Posterior vena cava (tissue), 2 donors: ENCODE measurements at regions of chr19 and their contacts with region 1.

Region 1: GRCh38 chr19:15177269-15178116 is 23.3 kb downstream of the NOTCH3 start:
- DNase-seq: peak; percentile 94

Region 2: DNA sequence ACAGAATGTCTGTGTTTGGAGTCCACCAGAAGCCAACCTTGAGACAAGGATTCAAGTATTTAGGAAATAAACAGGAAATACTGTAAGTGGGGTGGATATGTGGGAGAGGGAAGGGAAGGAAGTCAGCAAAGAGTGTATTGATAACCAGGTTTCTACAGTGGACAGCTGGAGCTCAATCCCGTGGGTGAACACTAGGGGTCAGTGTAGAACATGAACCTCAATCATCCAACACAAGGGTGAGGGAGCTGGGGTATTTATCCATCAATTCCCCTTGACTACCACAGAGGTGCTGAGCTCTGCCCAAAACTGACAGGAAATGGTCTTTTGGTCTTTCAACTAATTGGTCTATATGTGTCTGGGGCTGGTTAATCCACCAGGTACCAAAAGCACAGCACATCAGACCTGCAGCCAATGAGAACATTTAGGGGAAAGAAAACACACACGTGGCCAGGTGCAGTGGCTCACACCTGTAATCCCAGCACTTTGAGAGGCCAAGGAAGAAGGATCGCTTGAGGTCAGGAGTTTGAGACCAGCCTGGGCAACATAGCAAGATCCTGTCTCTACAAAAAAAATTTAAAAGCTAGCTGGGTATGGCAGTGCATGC is 75.9 kb before region 1 on chr19:
- intact Hi-C with region 1: no loop called
- DNase-seq: no peak

Region 3: DNA sequence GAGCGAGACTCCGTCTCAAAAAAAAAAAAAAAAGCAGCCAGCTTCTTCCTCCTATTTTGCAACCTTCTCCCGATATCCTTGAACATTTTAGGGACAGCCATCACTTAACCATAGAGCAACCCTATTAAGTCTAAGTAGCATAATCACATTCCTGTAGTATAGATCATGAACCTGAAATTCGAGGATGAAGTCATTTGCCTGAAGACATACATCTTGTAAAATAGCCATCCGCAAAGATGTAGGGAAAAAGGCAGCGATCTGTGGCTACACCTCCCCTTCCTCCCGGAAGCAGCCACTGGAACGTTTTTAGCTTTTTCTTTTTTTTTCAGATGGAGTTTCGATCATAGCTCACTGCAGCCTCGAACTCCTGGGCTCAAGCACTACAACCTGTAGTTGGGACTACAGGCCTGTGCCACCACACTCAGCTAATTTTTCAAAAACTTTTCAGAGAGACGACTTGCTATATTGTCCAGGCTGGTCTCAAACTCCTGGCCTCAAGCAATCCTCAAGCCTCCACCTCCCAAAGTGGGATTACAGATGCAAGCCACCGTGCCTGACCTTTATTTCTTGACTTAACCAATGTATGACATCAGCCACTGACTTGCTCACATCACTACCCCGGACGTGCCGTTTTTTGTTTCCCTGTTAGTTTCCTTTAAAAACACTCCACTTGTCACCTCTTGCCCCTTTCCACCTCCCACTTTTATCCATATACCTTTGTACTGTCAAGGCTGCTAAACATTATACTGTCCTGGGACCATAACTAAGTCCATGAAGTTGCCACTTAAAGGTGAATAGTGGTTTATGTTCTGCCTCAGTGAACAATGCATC is 56.8 kb after region 1 on chr19:
- intact Hi-C with region 1: loop called in 1 of 2 experiments (anchors 10 kb)
- DNase-seq: no peak

Region 4: DNA sequence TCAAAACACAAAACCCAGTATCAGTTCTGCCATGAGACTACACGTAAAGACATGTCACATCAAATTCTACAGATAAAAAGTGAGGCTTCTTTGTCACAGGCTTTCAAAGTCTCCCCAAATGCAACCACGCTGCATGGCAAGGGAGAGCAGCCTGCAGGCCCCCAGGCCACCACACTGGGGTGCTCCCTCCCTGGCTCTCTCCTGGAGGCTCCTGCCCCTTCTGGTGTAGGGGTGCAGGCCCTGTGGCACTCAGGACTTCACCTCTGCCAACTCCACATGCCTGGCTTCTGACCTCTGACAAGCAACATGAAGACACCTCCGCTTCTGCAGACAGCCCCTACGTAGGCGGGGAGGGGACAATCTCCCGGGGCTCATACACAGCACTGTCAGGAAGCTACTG is 187.8 kb after region 1 on chr19:
- intact Hi-C with region 1: loop called (anchors 10 kb)
- DNase-seq: no peak